Cardiac septum (tissue), 1 donor: ENCODE measurements at regions of chr9 and their contacts with region 1.

Region 1: GRCh38 chr9:4904322-4905134 is 80.5 kb upstream of the JAK2 start:
- DNase-seq: no peak

Region 2: GRCh38 chr9:4929890-4930289 is 25.4 kb after region 1 on chr9:
- intact Hi-C with region 1: loop called (anchors 2 kb)
- DNase-seq: no peak